ENCODE measurements at regions of chr3 and their contacts with region 1.

Region 1: GRCh38 chr3:45123030-45123429 is 23.1 kb downstream of the CDCP1 start:
- DNase-seq: peak; percentile 97
- ATAC-seq: peak; percentile 47
- H3K4me3 ChIP-seq: peak overlapping the region; percentile 10; the same call in 1 of the 2 replicates
- H3K27ac ChIP-seq: peak overlapping the region; percentile 100
- H3K4me1 ChIP-seq: peaks cover 96% of the 10 kb centered on the region
- H3K27me3 ChIP-seq: no peaks in the 10 kb centered on the region
- CTCF ChIP-seq: no peak

Region 2: DNA sequence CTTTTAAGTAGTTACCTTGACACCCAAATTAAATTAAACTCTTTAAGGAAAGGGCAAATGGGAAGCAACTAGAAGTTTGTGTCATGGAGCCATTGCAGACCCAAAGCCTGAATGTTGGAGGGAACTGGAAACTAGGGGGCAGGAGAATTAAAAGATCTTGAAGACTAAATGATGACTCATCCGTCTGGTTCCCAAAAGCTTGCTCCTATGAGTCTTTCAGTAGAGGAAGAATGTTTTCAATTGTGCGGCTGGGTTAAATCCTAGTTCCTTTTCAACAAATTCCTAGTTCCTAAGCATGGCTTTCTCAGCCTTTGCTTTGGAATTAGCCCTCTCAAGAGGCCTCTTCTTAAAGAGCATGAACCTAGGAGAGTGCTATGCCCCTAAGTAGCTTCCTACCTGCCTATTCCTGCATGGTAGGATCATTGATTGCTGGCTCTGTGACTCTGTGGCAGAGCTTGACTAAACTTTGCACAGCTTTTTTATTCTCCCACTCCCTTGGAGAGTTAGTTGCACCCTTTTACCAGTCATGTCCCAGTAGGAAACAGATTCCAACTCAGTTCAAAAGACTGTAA is 79.2 kb before region 1 on chr3:
- CTCF ChIA-PET with region 1: interaction called, 13 read pairs
- POLR2A ChIA-PET with region 1: interaction called, 8 read pairs
- intact Hi-C with region 1: loop called (anchors 1 kb)
- DNase-seq: peak; percentile 78
- ATAC-seq: peak; percentile 27; the same call in 1 of the 2 replicates
- H3K4me3 ChIP-seq: no peak overlapping the region
- H3K27ac ChIP-seq: peak overlapping the region; percentile 54
- H3K4me1 ChIP-seq: peaks cover 31% of the 10 kb centered on the region
- H3K27me3 ChIP-seq: no peaks in the 10 kb centered on the region
- CTCF ChIP-seq: peak; percentile 48

Region 3: DNA sequence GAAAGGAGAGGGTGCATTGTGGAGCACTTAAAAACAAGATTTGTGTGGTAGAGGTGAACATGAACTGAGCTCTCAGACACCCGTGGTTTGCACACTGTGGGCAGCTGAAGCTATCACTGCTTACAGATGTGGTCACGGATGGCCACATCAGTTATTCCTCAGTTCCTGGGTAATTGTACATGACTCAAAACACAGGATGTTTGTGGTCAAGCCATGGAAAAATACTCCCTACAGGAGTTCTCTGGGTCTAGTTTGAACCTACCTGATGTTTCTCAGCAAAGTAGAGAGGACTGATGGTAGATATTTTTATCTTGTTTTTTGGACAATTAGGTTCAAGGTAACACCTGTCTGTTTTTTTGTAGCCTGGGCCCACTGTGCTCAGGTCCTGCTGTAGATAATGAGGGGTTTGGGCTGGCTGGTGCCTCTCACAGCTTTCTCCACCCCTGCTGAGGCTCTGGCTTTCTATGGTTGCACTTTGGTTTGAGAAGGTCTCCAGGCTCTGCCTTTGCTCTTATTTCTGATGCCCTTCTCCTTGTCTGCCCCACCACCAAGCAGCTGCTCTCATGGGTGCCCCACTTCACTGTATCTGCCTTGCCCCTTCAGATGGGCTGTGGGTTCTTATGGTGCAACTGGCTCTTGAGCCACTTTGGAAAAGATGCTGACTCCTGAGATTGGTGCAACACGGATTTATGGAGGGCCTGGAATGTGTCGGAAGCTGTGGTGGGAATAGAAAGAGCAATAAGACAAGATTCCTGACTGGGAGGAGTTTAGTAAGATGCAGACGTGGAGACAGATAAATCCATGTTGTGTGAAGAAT is 17.0 kb before region 1 on chr3:
- CTCF ChIA-PET with region 1: no interaction called
- POLR2A ChIA-PET with region 1: interaction called, 14 read pairs
- intact Hi-C with region 1: no loop called
- DNase-seq: peak; percentile 92
- ATAC-seq: peak; percentile 92
- H3K4me3 ChIP-seq: no peak overlapping the region
- H3K27ac ChIP-seq: peak overlapping the region; percentile 93
- H3K4me1 ChIP-seq: peaks cover 26% of the 10 kb centered on the region
- H3K27me3 ChIP-seq: no peaks in the 10 kb centered on the region
- CTCF ChIP-seq: no peak

Region 4: DNA sequence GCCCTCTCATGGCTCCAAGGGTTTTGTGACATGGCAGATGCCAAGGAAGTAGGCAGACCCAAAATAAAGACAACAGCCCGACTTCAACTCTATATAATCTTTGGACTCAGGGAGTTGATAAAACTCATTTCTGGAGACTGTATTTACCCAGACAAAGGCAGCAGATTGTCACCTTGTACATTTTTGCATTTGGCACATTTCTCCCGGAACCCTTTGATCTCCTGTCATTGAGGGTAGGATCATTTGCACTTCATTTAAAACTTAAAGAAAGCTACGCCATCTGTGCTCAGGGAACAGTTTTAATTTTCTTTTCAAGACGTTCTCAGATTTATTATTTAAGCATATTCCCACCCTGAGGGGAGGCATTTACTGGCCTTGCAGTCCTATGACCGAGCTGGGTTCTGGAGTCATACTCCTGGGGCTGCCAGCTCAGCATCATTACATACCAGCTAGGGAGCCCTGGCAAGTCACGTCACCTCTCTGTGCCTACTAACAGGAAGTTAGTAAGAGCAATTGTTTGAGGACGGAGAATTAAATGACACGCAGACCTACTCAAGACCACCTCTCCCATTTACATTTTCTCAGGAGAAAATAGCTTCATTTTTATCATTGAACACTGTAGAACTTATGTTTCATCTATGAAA is 17.2 kb after region 1 on chr3:
- CTCF ChIA-PET with region 1: interaction called, 3 read pairs
- POLR2A ChIA-PET with region 1: interaction called, 12 read pairs
- intact Hi-C with region 1: loop called (anchors 1 kb)
- DNase-seq: peak; percentile 86
- ATAC-seq: peak; percentile 69
- H3K4me3 ChIP-seq: no peak overlapping the region
- H3K27ac ChIP-seq: peak overlapping the region; percentile 76
- H3K4me1 ChIP-seq: peaks cover 80% of the 10 kb centered on the region
- H3K27me3 ChIP-seq: no peaks in the 10 kb centered on the region
- CTCF ChIP-seq: no peak

Region 5: DNA sequence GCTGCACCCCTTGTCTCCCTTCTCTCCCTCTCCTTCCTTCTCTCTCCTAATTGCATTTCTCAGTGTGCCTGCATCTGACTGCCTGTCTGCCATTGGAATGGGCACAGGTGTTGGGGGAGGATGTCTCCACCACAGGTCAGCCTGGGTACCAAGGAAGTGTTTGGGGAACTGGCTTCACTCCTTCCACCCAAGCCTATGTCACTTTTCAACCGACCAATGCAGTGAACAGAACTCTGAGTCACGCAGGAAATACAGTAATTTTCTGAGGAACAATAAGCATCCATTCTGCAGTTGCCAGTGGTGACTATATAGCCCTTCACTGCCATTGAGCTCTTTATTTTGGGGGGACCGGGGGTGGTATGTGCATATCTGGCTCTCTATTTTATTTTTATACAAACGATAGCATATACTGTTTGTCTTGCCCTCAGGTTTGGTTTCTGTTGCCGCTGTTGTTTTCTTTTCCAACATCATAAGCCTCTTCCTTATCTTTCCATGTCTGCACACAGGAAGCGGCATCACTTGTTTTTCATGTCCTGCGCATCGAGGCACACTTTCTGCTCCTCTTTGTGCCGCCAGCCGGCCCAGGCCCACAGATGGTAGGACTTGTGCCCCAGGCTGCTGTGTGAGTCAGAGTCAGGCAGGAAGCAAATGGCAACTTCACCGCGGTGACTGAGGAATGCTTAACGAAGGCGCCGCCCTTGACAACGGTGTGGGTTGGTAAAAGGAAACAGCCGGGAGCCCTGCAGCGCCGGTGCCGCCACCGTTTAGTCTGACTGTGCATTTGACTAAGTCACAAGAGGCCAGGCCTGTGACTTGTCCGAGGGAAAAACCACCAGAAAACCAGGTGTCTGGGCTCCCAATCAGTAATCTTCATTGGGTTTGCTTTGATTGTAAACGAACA is 44.2 kb after region 1 on chr3:
- CTCF ChIA-PET with region 1: interaction called, 5 read pairs
- POLR2A ChIA-PET with region 1: interaction called, 4 read pairs
- intact Hi-C with region 1: loop called (anchors 1 kb)
- DNase-seq: peak; percentile 99
- ATAC-seq: peak; percentile 93
- H3K4me3 ChIP-seq: peak overlapping the region; percentile 34; the same call in 1 of the 2 replicates
- H3K27ac ChIP-seq: peak overlapping the region; percentile 96
- H3K4me1 ChIP-seq: peaks cover 44% of the 10 kb centered on the region
- H3K27me3 ChIP-seq: no peaks in the 10 kb centered on the region
- CTCF ChIP-seq: no peak

Region 6: DNA sequence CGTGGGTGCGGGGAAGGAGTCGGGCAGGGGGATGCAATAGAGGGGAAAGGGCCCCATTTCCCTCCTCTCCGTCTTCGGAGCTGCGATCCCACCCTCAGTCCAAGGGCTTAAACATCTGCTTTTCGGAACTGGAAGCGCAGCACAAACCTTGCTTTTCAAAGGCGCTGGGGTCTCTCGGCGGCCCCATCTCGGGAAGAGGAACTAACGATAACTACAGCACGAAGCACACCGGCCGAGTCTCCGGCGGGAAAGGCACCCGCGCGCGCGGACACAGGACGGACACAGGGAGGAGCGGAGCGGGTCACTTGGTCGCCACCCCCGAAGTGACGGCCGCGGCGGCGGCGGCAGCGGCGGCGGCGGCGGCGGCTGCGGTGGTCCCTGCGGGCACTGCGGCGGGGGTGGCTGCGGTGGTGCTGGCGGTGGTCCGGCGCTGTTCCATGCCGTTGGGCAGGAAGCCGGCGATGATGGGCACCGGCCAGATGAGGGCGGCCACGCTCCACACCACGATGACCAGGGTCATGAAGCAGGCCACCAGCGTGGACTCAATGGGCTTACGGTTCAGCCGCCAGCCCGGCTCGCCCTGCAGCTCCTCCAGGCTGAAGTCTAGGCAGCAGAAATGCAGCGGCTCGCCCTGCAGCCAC is 101.9 kb after region 1 on chr3:
- CTCF ChIA-PET with region 1: no interaction called
- POLR2A ChIA-PET with region 1: interaction called, 3 read pairs
- intact Hi-C with region 1: loop called (anchors 1 kb)
- DNase-seq: peak; percentile 73
- ATAC-seq: peak; percentile 61
- H3K4me3 ChIP-seq: peak overlapping the region; percentile 76
- H3K27ac ChIP-seq: peak overlapping the region; percentile 64
- H3K4me1 ChIP-seq: peaks cover 15% of the 10 kb centered on the region
- H3K27me3 ChIP-seq: no peaks in the 10 kb centered on the region
- CTCF ChIP-seq: peak; percentile 58